ENCODE measurements at regions of chr9 and their contacts with region 1.

Region 1: DNA sequence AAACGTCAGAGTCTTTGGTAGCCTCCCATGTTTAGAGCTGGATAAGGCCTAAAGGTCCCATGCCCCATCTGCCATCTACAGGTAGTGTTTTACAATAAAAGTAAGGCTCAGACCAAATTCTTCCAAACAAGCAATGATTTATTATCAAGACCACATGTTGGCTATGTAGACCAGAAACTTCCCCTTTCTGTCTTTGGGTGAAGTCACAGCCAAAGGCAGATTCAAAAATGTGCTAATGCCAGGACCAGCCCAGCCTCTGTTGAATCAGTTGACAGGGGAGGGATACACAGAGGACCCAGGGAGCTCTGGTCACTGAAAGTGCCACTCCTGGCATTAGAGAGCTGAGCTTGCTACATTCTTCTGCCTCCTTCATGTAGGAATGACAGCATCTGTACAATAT is 360.8 kb downstream of the NTRK2 start:
- DNase-seq: no peak
- H3K4me3 ChIP-seq: no peak overlapping the region
- H3K27ac ChIP-seq: no peak overlapping the region
- H3K4me1 ChIP-seq: no peaks in the 10 kb centered on the region
- H3K27me3 ChIP-seq: no peaks in the 10 kb centered on the region
- CTCF ChIP-seq: no peak

Region 2: GRCh38 chr9:84924266-84924665 is 106.0 kb before region 1 on chr9:
- CTCF ChIA-PET with region 1: no interaction called
- POLR2A ChIA-PET with region 1: no interaction called
- intact Hi-C with region 1: no loop called
- DNase-seq: no peak
- H3K4me3 ChIP-seq: no peak overlapping the region
- H3K27ac ChIP-seq: no peak overlapping the region
- H3K4me1 ChIP-seq: no peaks in the 10 kb centered on the region
- H3K27me3 ChIP-seq: no peaks in the 10 kb centered on the region
- CTCF ChIP-seq: no peak

Region 3: DNA sequence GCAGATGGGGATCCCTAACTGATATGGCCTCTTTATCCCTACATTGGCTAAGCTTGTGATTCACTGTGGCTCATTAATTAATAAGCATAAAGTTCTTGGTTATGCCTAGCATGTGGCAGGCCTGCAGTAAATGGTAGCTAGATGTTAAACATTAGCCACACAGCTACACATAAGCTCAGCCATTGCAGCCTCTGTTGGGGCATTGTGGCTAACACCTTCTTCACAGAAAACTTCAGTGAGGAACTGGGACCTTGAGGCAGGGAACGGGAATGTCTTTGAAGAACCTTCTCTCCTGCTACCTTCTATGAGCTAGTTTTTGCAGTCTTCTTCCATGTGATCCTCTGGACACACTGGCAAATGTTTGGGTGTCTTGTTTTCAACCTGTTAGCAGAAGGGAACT is 22.6 kb before region 1 on chr9:
- CTCF ChIA-PET with region 1: interaction called, 11 read pairs
- POLR2A ChIA-PET with region 1: no interaction called
- intact Hi-C with region 1: no loop called
- DNase-seq: no peak
- H3K4me3 ChIP-seq: no peak overlapping the region
- H3K27ac ChIP-seq: no peak overlapping the region
- H3K4me1 ChIP-seq: no peaks in the 10 kb centered on the region
- H3K27me3 ChIP-seq: no peaks in the 10 kb centered on the region
- CTCF ChIP-seq: no peak

Measured in A673 (cell line).